ENCODE measurements at regions of chr5 and their contacts with region 1.

Region 1: DNA sequence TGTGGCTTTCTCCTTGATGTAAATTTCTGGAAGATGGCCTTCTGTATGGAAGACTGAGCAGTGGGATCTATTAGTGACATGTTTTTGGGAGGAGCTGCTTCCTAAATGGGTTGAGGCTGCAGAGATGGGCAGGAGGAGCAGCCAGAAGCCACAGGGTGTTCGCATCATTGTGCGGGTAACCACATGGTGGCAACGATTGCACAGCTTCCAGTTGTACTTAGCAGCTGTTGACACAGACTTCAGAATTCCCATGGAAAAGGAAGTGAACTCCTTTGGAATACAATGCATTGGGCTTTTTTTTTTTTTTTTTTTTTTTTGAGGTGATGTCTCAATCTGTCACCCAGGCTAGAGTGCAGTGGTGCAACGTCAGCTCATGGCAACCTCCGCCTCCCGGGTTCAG is 297.3 kb downstream of the NR3C1 start:
- DNase-seq: peak; percentile 55 to 67
- H3K4me3 ChIP-seq: no peak overlapping the region
- H3K4me3 Mint-ChIP-seq: no peak overlapping the region
- H3K27ac Mint-ChIP-seq: no peak overlapping the region
- H3K4me1 ChIP-seq: peaks cover 8% of the 10 kb centered on the region
- H3K4me1 Mint-ChIP-seq: no peaks in the 10 kb centered on the region
- H3K27me3 ChIP-seq: no peaks in the 10 kb centered on the region
- H3K27me3 Mint-ChIP-seq: no peaks in the 10 kb centered on the region
- CTCF ChIP-seq: peak in 1 of 2 experiments; percentile 40

Region 2: GRCh38 chr5:143403593-143404415 is 297.6 kb after region 1 on chr5 and contains the start of gene NR3C1:
- CTCF ChIA-PET with region 1: interaction called, 3 read pairs
- POLR2A ChIA-PET with region 1: no interaction called
- intact Hi-C with region 1: loop called (anchors 2 kb)
- DNase-seq: peak; percentile 57 to 78
- H3K4me3 ChIP-seq: peak within 1 kb of the TSS; percentile 90
- H3K4me3 Mint-ChIP-seq: peak within 1 kb of the TSS; percentile 77
- H3K27ac Mint-ChIP-seq: peak within 1 kb of the TSS; percentile 15
- H3K4me1 ChIP-seq: no peaks in the 10 kb centered on the region
- H3K4me1 Mint-ChIP-seq: peaks cover 13% of the 10 kb centered on the region
- H3K27me3 ChIP-seq: no peaks in the 10 kb centered on the region; the same call in 1 of the 2 replicates
- H3K27me3 Mint-ChIP-seq: no peaks in the 10 kb centered on the region
- CTCF ChIP-seq: peak; percentile 36 to 57
- total RNA-seq, gene NR3C1: 15.4 and 17.5 TPM in 2 replicates

Region 3: GRCh38 chr5:143957455-143957854 is 851.3 kb after region 1 on chr5:
- CTCF ChIA-PET with region 1: no interaction called
- POLR2A ChIA-PET with region 1: no interaction called
- intact Hi-C with region 1: loop called (anchors 10 kb)
- DNase-seq: no peak
- H3K4me3 ChIP-seq: no peak overlapping the region
- H3K4me3 Mint-ChIP-seq: no peak overlapping the region
- H3K27ac Mint-ChIP-seq: no peak overlapping the region
- H3K4me1 ChIP-seq: no peaks in the 10 kb centered on the region
- H3K4me1 Mint-ChIP-seq: no peaks in the 10 kb centered on the region
- H3K27me3 ChIP-seq: no peaks in the 10 kb centered on the region
- H3K27me3 Mint-ChIP-seq: peaks cover 12% of the 10 kb centered on the region
- CTCF ChIP-seq: peak; percentile 25 to 31

Measured in Caco-2 (cell line).